Left cardiac atrium (tissue), 4 donors: ENCODE measurements at regions of chr7 and their contacts with region 1.

Region 1: DNA sequence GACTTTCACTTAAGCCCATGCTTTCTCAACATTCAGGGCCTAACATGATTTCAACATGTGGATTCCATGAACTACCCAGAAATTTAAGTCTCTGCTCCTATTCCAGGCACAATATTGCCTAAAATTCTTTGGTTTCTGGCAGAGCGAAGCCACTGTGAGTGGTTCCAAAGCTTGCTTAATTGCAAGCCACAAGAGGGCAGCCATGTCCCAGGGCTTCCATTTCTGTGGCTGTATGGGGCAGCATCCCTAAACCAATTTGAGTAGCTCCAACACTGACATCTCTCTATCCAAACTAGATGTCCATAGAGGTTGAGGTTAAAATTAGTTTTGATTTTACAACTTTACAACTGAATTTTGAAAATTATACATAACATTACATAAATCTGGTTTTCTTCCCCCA is 56.3 kb upstream of the MDFIC start:
- DNase-seq: peak; percentile 54
- ATAC-seq: peak; percentile 85 to 94

Region 2: DNA sequence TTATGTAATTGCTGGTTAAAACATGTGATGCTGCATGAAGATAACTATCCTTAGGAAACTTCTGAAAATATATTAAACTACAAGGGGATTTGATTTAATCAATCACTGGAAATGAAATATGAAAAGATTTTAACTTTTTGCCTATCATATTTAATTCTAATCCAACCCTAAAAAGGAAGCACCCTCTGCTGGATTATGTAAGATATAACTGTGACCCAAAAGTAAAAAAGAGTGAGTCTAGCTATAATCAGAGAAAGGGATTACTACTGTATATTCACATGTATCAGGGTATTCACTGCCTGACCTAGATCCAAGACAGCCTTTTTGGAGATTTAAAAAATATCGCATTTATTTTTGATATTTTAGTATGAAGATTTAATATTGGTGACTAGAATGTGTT is 351.8 kb after region 1 on chr7:
- intact Hi-C with region 1: loop called (anchors 5 to 10 kb)
- DNase-seq: no peak
- ATAC-seq: peak in 1 of 2 donors; percentile 54

Region 3: GRCh38 chr7:115679976-115680375 is 814.4 kb after region 1 on chr7:
- intact Hi-C with region 1: loop called in 1 of 2 experiments (anchors 10 kb)
- DNase-seq: no peak
- ATAC-seq: no peak

Region 4: GRCh38 chr7:115906731-115907130 is 1041.2 kb after region 1 on chr7:
- intact Hi-C with region 1: loop called in 1 of 2 experiments (anchors 10 kb)
- DNase-seq: no peak
- ATAC-seq: no peak